HEK293 (cell line): ENCODE measurements at regions of chr10 and their contacts with region 1.

Region 1: DNA sequence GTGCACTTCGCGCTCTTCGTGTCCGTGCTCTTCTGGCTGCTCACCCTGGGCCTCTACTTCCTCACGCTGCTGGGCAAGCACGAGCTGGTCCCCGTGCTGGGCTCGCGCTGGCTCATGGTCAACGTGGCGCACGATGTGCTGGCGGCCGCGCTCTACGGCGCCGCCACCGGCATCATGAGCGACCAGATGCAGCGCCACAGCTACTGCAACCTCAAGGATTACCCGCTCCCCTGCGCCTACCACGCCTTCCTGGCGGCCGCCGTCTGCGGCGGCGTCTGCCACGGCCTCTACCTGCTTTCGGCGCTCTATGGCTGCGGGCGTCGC is 480 bp downstream of the MARVELD1 start:
- H3K4me3 ChIP-seq: peak overlapping the region; percentile 54
- H3K27ac ChIP-seq: peak overlapping the region; percentile 95
- H3K4me1 ChIP-seq: peaks cover 16% of the 10 kb centered on the region
- CTCF ChIP-seq: peak; percentile 99

Region 2: DNA sequence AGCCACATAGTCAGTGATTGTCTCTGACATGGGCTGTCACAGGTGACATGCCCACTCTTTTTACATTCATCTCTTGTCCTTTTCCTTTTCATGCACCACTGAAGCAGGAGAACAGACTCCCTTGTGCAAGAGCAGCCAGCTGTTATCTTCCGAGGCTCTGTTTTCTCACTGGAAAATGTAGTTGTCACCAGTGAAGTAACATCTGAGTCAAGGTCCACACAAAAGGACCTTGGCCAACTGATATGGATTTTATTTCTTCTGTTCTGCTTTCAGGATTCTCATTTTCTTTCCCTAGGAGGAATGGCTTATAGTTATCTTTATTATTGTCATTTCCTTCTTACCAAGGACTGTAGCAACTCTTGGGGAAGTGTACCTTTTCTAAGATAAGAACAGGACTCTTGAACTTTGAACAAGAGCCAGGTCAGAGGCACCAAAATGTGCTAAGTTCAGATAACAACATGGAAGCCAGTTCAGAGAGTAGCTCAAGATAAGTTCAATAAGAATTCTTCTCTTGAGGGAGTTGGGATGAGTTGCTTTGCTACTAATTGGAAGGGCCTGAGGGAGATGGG is 49.6 kb before region 1 on chr10:
- CTCF ChIA-PET with region 1: interaction called, 10 read pairs
- POLR2A ChIA-PET with region 1: no interaction called
- H3K4me3 ChIP-seq: no peak overlapping the region
- H3K27ac ChIP-seq: no peak overlapping the region
- H3K4me1 ChIP-seq: 0 out of 2 replicates have a peak, but pooled peaks cover 3% of the 10 kb centered on the region
- CTCF ChIP-seq: no peak

Region 3: GRCh38 chr10:97686962-97687784 is 26.8 kb before region 1 on chr10 and contains the start of gene AVPI1:
- CTCF ChIA-PET with region 1: interaction called, 26 read pairs
- POLR2A ChIA-PET with region 1: interaction called, 36 read pairs
- H3K4me3 ChIP-seq: peak within 1 kb of the TSS; percentile 71
- H3K27ac ChIP-seq: peak within 1 kb of the TSS; percentile 63; the same call in 1 of the 2 replicates
- H3K4me1 ChIP-seq: peaks cover 10% of the 10 kb centered on the region; the same call in 1 of the 2 replicates
- CTCF ChIP-seq: no peak

Region 4: GRCh38 chr10:97701438-97702069 is 12.5 kb before region 1 on chr10:
- CTCF ChIA-PET with region 1: interaction called, 43 read pairs
- POLR2A ChIA-PET with region 1: interaction called, 8 read pairs
- H3K4me3 ChIP-seq: no peak overlapping the region
- H3K27ac ChIP-seq: no peak overlapping the region
- H3K4me1 ChIP-seq: no peaks in the 10 kb centered on the region
- CTCF ChIP-seq: peak; percentile 82

Region 5: GRCh38 chr10:97724341-97724941 is 10.4 kb after region 1 on chr10:
- CTCF ChIA-PET with region 1: interaction called, 487 read pairs
- POLR2A ChIA-PET with region 1: interaction called, 16 read pairs
- H3K4me3 ChIP-seq: no peak overlapping the region
- H3K27ac ChIP-seq: no peak overlapping the region
- H3K4me1 ChIP-seq: peaks cover 2% of the 10 kb centered on the region; the same call in 1 of the 2 replicates
- CTCF ChIP-seq: no peak

Region 6: GRCh38 chr10:97731346-97732051 is 17.5 kb after region 1 on chr10:
- CTCF ChIA-PET with region 1: interaction called, 487 read pairs
- POLR2A ChIA-PET with region 1: interaction called, 18 read pairs
- H3K4me3 ChIP-seq: no peak overlapping the region
- H3K27ac ChIP-seq: no peak overlapping the region
- H3K4me1 ChIP-seq: no peaks in the 10 kb centered on the region
- CTCF ChIP-seq: peak; percentile 82

Region 7: DNA sequence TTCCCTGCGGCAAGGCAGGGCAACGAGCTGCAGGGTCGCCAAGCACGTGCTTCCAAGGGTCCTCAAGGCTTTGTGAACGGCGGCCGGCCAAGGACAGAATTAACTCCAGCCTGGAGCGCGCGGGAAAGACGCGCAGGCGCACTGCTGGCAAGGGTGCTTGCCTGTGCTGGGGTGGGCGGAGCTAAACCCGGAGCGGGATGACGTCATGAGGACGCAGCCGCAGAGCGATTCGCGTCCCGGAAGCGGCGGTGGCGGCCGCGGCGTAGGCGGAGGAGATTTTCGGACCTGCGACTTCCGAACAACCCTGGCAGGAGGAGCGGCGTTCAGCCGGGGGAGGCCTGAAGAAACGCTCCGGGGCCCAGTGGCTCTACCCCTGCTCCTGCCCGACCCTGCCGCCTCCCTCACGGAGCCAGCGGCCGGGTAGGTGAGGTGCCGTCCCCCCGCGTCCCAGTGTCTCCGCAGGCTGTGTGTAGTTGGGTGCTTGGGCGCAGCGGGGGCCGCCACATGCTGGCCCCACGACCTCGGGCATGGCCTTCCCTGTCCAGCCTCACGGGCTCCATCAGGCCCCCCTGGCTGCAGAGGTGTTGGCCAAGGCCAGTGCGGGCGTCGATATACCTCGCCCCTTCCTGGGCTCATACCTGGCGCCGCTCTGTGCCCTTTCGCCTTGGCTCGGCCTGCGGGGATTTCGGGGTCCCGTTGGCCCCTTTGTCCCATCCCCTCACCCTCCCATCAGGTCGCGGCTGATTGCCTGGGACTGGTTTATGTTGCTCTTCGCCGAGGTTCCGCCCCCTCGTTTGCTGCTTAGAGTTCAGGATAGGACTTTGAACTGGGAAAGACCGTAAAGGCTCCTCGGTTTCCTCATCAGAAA is 23.1 kb after region 1 on chr10 and contains the start of gene ZFYVE27:
- CTCF ChIA-PET with region 1: interaction called, 487 read pairs
- POLR2A ChIA-PET with region 1: interaction called, 18 read pairs
- H3K4me3 ChIP-seq: peak within 1 kb of the TSS; percentile 91
- H3K27ac ChIP-seq: peak within 1 kb of the TSS; percentile 59; the same call in 1 of the 2 replicates
- H3K4me1 ChIP-seq: 0 out of 2 replicates have a peak, but pooled peaks cover 2% of the 10 kb centered on the region
- CTCF ChIP-seq: no peak; the same call in 1 of the 2 replicates